MCF 10A (cell line): ENCODE measurements at regions of chr21 and their contacts with region 1.

Region 1: DNA sequence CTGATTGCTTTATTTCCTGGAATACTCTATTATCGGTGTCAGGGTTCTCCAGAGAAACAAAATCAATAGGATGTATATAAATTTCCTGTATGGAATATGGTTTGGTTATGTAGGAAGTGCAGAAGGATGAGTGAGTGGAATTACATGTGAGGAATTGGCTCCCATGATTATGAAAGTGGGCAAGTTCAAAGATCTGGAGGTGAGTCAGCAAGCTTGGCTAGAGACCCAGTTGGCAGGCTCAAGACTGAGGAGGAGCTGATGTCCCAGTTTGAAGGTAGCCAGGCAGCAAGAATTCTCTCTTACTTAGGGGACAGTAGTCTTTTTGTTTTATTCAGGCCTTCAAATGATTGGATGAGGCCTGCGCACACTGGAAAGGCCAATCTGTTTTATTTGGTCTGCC is 57.5 kb downstream of the MAP3K7CL start:
- DNase-seq: peak; percentile 95
- H3K4me3 Mint-ChIP-seq: peak overlapping the region; percentile 51
- H3K27ac Mint-ChIP-seq: peak overlapping the region; percentile 84
- H3K4me1 Mint-ChIP-seq: peaks cover 43% of the 10 kb centered on the region
- H3K27me3 Mint-ChIP-seq: no peaks in the 10 kb centered on the region
- CTCF ChIP-seq: no peak

Region 2: GRCh38 chr21:29155118-29155932 is 32.6 kb before region 1 on chr21:
- CTCF ChIA-PET with region 1: no interaction called
- POLR2A ChIA-PET with region 1: interaction called, 11 read pairs
- intact Hi-C with region 1: no loop called
- DNase-seq: peak; percentile 52
- H3K4me3 Mint-ChIP-seq: peak overlapping the region; percentile 58
- H3K27ac Mint-ChIP-seq: peak overlapping the region; percentile 39
- H3K4me1 Mint-ChIP-seq: peaks cover 25% of the 10 kb centered on the region
- H3K27me3 Mint-ChIP-seq: no peaks in the 10 kb centered on the region
- CTCF ChIP-seq: no peak

Region 3: GRCh38 chr21:29175408-29176134 is 12.4 kb before region 1 on chr21:
- CTCF ChIA-PET with region 1: no interaction called
- POLR2A ChIA-PET with region 1: interaction called, 60 read pairs
- intact Hi-C with region 1: no loop called
- DNase-seq: peak; percentile 65
- H3K4me3 Mint-ChIP-seq: no peak overlapping the region
- H3K27ac Mint-ChIP-seq: peak overlapping the region; percentile 84
- H3K4me1 Mint-ChIP-seq: peaks cover 13% of the 10 kb centered on the region
- H3K27me3 Mint-ChIP-seq: no peaks in the 10 kb centered on the region
- CTCF ChIP-seq: no peak